HCT116 (cell line): ENCODE measurements at regions of chr11 and their contacts with region 1.

Region 1: DNA sequence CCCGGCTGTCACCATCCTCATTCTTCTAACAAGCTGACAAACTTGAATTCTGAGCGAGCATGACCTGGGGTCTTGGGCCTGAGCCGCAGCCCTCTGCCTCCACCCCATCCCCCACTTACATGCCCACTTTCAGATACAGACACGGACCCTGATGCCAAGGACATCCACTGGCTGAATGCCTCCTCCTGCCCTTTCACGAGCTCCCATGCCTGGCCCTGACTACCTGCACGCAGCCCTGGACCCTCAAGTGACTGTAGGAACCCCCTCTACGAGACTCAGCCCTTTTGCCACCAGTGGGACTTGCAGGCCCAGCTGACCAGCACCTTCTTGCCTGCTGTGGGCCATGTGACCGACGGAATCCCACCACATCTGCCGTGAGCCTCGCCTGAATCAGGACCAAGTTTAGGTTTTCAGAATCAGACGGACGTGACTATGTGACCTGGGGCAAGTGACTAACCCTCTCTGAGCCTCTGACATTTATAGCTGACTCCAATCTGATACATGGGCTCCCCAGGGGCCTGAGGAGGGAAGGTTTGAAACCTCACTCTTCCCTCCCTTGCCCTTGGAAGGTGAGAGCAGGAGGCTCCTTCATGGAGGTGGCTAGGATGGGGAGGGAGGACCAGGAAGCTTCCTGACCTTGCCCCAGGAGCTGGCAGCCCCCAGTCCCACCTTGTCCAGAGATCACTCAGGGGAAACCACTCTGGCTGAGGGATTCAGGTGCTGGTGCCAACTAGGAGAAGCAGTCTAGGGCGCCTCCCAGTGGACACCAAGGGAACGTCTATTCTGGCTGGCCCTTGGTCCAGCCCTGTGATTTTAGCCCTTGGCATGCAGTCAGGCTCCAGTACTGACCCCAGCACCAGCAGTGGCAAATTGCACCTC is 46.9 kb upstream of the SYT7 start:
- DNase-seq: peak; percentile 45
- ATAC-seq: peak; percentile 88
- H3K4me3 ChIP-seq: no peak overlapping the region
- H3K27ac ChIP-seq: peak overlapping the region; percentile 68
- H3K4me1 ChIP-seq: peaks cover 33 to 53% of the 10 kb centered on the region in 2 experiments
- H3K27me3 ChIP-seq: no peaks in the 10 kb centered on the region
- CTCF ChIP-seq: peak; percentile 92 to 96 (median 95)
- POLR2A ChIP-seq: no peak
- RAD21 ChIP-seq: peak; percentile 99

Region 2: GRCh38 chr11:61173456-61173855 is 454.4 kb before region 1 on chr11:
- CTCF ChIA-PET with region 1: no interaction called
- POLR2A ChIA-PET with region 1: no interaction called
- RAD21 ChIA-PET with region 1: no interaction called
- intact Hi-C with region 1: no loop called
- DNase-seq: no peak
- ATAC-seq: no peak
- H3K4me3 ChIP-seq: no peak overlapping the region
- H3K27ac ChIP-seq: no peak overlapping the region
- H3K4me1 ChIP-seq: no peaks in the 10 kb centered on the region
- H3K27me3 ChIP-seq: 0 out of 2 replicates have a peak, but pooled peaks cover 3% of the 10 kb centered on the region
- CTCF ChIP-seq: no peak
- POLR2A ChIP-seq: no peak
- RAD21 ChIP-seq: no peak

Region 3: DNA sequence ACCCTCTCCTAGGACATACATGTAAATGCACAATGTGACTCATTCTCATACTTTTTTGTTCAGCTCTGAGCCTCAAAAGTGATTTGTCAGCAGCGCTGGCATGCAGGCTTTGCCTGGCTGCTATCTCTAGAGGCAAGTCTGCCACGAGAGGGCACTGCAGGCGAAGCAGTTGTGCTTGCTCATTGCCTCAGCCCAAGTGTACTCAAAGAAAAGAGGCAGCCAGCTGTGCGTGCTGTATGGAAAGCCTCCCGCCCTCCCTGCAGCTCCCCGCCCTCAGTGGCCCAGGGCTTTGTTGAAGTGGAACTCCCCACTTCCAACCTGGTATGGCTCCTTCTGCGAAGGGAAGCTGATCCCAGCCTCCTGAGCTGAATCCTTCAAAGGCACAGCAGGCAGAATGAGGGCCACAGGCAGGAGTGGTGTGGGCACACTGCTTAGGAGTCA is 181.6 kb before region 1 on chr11:
- CTCF ChIA-PET with region 1: interaction called, 10 read pairs
- POLR2A ChIA-PET with region 1: no interaction called
- RAD21 ChIA-PET with region 1: no interaction called
- intact Hi-C with region 1: loop called (anchors 2 kb)
- DNase-seq: peak; percentile 73
- ATAC-seq: peak; percentile 98
- H3K4me3 ChIP-seq: no peak overlapping the region
- H3K27ac ChIP-seq: peak overlapping the region; percentile 15; the same call in 1 of the 2 replicates
- H3K4me1 ChIP-seq: peaks cover 0 to 8% of the 10 kb centered on the region in 2 experiments; a peak in 2 of 4 replicates
- H3K27me3 ChIP-seq: no peaks in the 10 kb centered on the region
- CTCF ChIP-seq: peak; percentile 81 to 94 (median 91); a peak in 5 of 6 replicates
- POLR2A ChIP-seq: no peak
- RAD21 ChIP-seq: peak; percentile 84

Region 4: DNA sequence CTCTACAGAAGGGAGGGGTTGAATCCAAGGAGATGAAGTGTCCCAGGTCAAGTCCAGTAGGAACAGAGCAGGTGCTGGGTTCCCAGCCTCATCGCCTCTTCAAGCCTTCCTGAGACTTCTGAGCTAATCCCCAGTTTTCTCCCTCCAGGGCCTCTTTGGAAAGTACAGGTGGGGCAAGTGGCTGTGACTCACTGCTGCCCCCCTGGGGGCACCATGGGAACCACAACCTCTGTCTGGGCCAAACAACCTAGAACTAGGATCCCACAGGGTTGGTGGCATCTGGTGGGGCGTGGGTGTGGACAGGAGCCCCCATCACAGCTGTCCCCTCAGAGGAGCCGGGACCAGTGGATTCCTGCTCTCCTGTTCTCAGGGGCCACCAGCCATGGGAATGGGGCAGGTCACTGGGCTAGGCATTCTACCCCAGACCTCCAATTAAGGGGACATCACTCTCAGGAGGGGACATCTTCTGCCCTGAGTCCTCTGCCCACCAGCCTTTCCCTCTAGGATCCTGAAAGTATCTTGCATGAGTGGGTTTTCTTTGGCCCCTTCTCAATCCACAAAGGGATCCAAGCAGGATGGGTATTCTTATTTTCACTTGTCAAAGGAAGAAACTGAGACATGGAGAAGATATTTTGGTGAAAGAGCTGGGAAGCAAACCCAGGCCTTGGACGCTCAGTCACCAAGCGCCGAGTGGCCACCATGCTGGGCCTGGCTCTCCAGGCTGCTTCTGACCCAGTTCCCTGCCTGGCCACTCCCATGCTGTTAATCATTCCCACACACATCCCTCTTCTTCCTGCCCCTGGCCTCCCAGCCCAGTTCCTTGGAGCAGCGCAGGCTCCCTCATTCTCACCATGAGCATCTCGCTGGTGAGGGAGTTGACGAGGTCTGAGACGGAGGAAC is 95.4 kb before region 1 on chr11:
- CTCF ChIA-PET with region 1: no interaction called
- POLR2A ChIA-PET with region 1: no interaction called
- RAD21 ChIA-PET with region 1: no interaction called
- intact Hi-C with region 1: loop called (anchors 5 kb)
- DNase-seq: no peak
- ATAC-seq: peak; percentile 93
- H3K4me3 ChIP-seq: no peak overlapping the region
- H3K27ac ChIP-seq: no peak overlapping the region
- H3K4me1 ChIP-seq: peaks cover 0 to 9% of the 10 kb centered on the region in 2 experiments; a peak in 2 of 4 replicates
- H3K27me3 ChIP-seq: no peaks in the 10 kb centered on the region
- CTCF ChIP-seq: peak; percentile 78 to 98 (median 93); a peak in 5 of 6 replicates
- POLR2A ChIP-seq: no peak
- RAD21 ChIP-seq: peak; percentile 58

Region 5: DNA sequence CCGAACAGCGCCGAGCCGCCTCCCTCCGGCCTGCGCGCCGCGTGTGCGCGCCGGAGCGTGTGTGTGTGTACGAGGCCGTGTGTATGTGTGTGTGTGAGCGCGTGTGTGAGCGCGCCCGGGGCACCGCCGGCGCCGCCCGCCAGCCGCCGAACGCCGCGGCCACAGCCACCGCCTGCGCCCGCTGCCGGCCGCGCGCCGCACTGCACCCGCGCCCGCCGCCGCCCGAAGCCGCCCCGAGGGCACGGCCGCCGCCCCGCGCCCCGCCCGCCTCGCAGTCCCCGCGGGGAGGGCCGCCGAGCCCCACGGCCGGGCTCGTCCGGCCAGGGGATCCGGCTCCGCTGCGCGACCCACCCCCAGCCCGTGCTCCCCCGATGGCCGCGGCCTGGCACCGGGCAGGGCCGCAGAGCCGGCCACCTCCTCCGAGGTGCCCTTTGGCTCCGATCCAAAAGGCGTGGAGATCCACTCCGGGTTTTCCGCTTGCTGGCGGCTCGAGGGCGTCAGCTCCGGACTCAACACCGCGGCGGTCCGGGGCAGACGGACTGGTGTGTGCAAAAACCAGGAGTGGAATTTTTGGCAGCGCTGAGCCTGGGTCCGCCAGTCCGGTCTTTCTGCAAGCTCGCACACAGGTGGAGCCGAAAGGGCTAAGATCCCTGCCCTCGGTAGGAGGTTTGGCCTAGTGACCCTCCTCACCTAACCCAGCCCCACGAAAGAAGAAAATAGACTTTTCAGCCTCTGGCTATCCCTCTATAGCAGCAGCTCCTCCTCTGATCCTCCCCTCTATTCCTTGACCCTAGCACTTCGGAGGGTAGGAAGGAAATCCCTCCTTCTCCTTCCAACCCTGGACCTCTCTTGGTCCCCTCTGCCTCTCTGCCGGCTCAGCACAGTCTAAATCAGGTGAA is 46.5 kb before region 1 on chr11 and contains the start of gene SYT7:
- CTCF ChIA-PET with region 1: interaction called, 11 read pairs
- POLR2A ChIA-PET with region 1: no interaction called
- RAD21 ChIA-PET with region 1: interaction called, 4 to 6 read pairs
- intact Hi-C with region 1: loop called (anchors 2 kb)
- DNase-seq: peak; percentile 94
- ATAC-seq: peak; percentile 84
- H3K4me3 ChIP-seq: peak within 1 kb of the TSS; percentile 62 to 82
- H3K27ac ChIP-seq: peak within 1 kb of the TSS; percentile 83
- H3K4me1 ChIP-seq: peaks cover 29 to 44% of the 10 kb centered on the region in 2 experiments; a peak in 3 of 4 replicates
- H3K27me3 ChIP-seq: no peaks in the 10 kb centered on the region
- CTCF ChIP-seq: no peak
- POLR2A ChIP-seq: no peak
- RAD21 ChIP-seq: no peak
- total RNA-seq, gene SYT7: 27.4 TPM